HepG2 (cell line): ENCODE measurements at regions of chr12 and their contacts with region 1.

Region 1: GRCh38 chr12:31117203-31118011 is 43.7 kb downstream of the DDX11 start:
- DNase-seq: peak; percentile 12
- ATAC-seq: peak; percentile 95
- H3K4me3 ChIP-seq: peak overlapping the region; percentile 30 to 69 (median 36); a peak in 5 of 6 replicates
- H3K27ac ChIP-seq: no peak overlapping the region
- H3K4me1 ChIP-seq: peaks cover 6% of the 10 kb centered on the region; the same call in 1 of the 2 replicates
- H3K27me3 ChIP-seq: no peaks in the 10 kb centered on the region
- CTCF ChIP-seq: peak; percentile 72
- EP300 ChIP-seq: no peak
- POLR2A ChIP-seq: no peak
- RAD21 ChIP-seq: peak; percentile 42; the same call in 1 of the 2 replicates

Region 2: GRCh38 chr12:30180602-30181001 is 936.8 kb before region 1 on chr12:
- CTCF ChIA-PET with region 1: no interaction called
- POLR2A ChIA-PET with region 1: no interaction called
- in situ Hi-C with region 1: no loop called
- intact Hi-C with region 1: no loop called
- DNase-seq: no peak
- ATAC-seq: no peak
- H3K4me3 ChIP-seq: no peak overlapping the region
- H3K27ac ChIP-seq: no peak overlapping the region
- H3K4me1 ChIP-seq: no peaks in the 10 kb centered on the region
- H3K27me3 ChIP-seq: no peaks in the 10 kb centered on the region
- CTCF ChIP-seq: no peak
- EP300 ChIP-seq: no peak
- POLR2A ChIP-seq: no peak
- RAD21 ChIP-seq: no peak

Region 3: GRCh38 chr12:31238764-31239387 is 121.5 kb after region 1 on chr12:
- CTCF ChIA-PET with region 1: interaction called, 4 read pairs
- POLR2A ChIA-PET with region 1: no interaction called
- in situ Hi-C with region 1: loop called (anchors 10 kb)
- intact Hi-C with region 1: loop called (anchors 2 kb)
- DNase-seq: peak; percentile 58
- ATAC-seq: peak; percentile 87
- H3K4me3 ChIP-seq: no peak overlapping the region
- H3K27ac ChIP-seq: no peak overlapping the region
- H3K4me1 ChIP-seq: no peaks in the 10 kb centered on the region
- H3K27me3 ChIP-seq: peaks cover 0 to 25% of the 10 kb centered on the region in 2 experiments; a peak in 3 of 5 replicates
- CTCF ChIP-seq: peak; percentile 78
- EP300 ChIP-seq: no peak
- POLR2A ChIP-seq: no peak
- RAD21 ChIP-seq: peak; percentile 42; the same call in 1 of the 2 replicates